ENCODE measurements at regions of chr18 and their contacts with region 1.

Region 1: DNA sequence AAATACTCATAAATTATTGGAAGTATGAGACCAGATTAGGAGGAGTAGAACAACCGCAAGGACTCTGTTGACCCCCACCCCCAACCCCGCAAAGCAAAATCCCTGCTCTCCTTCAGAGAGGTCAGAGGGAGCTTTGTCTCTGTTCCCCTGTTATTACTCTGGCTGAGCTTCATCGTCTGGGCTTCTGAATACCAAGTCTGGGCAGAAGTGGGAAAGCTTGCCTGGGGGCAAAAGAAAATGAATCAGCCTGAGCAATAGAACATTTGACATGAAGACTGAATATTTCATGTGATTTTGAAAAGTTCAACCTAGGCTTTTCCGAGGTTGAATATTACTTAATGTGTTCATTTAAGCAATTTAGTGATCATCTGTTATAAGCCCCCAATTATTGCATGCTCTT is 114.6 kb upstream of the ARHGAP28 start:
- DNase-seq: peak; percentile 69
- H3K4me3 ChIP-seq: no peak overlapping the region
- H3K27ac ChIP-seq: no peak overlapping the region
- H3K4me1 ChIP-seq: peaks cover 5% of the 10 kb centered on the region
- H3K27me3 ChIP-seq: no peaks in the 10 kb centered on the region
- CTCF ChIP-seq: no peak

Region 2: DNA sequence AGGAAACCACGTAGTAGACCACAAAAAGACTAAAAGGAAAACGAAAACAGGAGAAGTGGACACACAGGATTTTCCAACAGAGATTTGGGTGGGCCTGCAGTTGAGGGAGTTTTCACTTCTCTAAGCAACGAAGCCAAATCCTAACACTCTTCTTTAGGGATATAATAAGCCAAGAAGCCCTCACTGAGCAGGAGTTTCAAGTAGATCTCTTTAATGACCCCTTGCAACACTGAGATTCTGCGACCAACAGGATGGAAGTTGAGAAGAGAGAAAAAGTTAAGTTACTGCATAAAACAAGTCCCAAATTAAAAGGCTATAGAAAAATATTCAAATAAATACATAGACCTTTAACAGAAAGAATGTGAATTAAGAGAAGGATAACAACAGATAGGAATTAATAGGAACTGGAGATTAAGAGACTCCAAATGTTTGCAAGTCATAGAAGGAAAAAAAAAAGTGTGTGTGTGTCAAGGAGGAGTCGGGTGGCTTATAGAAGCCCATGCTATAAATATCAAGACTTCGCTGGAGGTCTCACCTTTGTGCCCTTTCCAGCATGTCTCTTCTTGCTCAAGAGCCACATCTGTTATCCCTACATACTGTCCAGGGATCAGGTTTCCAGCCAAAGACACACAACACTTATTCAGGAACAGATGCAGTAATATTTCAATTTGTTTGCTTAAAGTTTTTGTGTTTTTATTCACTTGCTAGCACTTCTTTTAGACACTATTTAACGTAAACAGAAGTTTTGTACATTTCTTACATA is 45.2 kb after region 1 on chr18:
- CTCF ChIA-PET with region 1: no interaction called
- dilution Hi-C with region 1: no loop called
- in situ Hi-C with region 1: no loop called
- intact Hi-C with region 1: no loop called
- DNase-seq: no peak
- H3K4me3 ChIP-seq: no peak overlapping the region
- H3K27ac ChIP-seq: no peak overlapping the region
- H3K4me1 ChIP-seq: no peaks in the 10 kb centered on the region
- H3K27me3 ChIP-seq: no peaks in the 10 kb centered on the region
- CTCF ChIP-seq: no peak

Region 3: DNA sequence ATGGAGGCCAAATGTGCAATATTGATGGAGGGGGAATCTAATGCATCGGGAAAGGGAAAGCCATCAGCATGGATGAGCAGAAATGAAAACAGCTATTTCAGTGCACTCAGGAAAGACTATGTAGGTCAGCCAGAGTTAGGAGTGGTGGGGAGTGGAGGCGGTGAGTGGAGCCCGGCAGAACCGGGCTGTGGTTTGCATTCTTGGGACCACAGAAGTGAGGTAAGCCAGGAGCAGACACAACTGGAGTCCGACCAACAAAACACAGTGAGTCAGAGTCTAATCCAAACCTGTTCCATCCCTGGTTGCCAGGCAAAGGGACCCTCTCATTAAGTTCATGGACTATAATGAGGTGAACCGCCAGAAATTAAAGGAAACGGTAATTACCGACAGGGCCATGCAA is 1933.2 kb after region 1 on chr18:
- CTCF ChIA-PET with region 1: interaction called, 16 read pairs
- dilution Hi-C with region 1: no loop called
- in situ Hi-C with region 1: no loop called
- intact Hi-C with region 1: no loop called
- DNase-seq: peak; percentile 90
- H3K4me3 ChIP-seq: no peak overlapping the region
- H3K27ac ChIP-seq: no peak overlapping the region
- H3K4me1 ChIP-seq: peaks cover 15% of the 10 kb centered on the region
- H3K27me3 ChIP-seq: no peaks in the 10 kb centered on the region
- CTCF ChIP-seq: no peak

Measured in mammary epithelial cell (primary cell).